Activated CD4-positive, alpha-beta T cell treated with anti-CD3 and anti-CD28 coated beads, Interleukin-2, amount 10 ng/mL, durations not matched to agents 24 days and 14 days (primary cell): ENCODE measurements at regions of chr16 and their contacts with region 1.

Region 1: GRCh38 chr16:75464130-75464918 is at the start of gene TMEM170A:
- DNase-seq: peak; percentile 100
- H3K4me3 Mint-ChIP-seq: peak within 1 kb of the TSS; percentile 89
- H3K27ac Mint-ChIP-seq: peak within 1 kb of the TSS; percentile 95
- H3K4me1 Mint-ChIP-seq: peaks cover 38% of the 10 kb centered on the region
- H3K27me3 Mint-ChIP-seq: peaks cover 2% of the 10 kb centered on the region
- total RNA-seq, gene TMEM170A: 39.1 and 46.0 TPM in 2 replicates

Region 2: DNA sequence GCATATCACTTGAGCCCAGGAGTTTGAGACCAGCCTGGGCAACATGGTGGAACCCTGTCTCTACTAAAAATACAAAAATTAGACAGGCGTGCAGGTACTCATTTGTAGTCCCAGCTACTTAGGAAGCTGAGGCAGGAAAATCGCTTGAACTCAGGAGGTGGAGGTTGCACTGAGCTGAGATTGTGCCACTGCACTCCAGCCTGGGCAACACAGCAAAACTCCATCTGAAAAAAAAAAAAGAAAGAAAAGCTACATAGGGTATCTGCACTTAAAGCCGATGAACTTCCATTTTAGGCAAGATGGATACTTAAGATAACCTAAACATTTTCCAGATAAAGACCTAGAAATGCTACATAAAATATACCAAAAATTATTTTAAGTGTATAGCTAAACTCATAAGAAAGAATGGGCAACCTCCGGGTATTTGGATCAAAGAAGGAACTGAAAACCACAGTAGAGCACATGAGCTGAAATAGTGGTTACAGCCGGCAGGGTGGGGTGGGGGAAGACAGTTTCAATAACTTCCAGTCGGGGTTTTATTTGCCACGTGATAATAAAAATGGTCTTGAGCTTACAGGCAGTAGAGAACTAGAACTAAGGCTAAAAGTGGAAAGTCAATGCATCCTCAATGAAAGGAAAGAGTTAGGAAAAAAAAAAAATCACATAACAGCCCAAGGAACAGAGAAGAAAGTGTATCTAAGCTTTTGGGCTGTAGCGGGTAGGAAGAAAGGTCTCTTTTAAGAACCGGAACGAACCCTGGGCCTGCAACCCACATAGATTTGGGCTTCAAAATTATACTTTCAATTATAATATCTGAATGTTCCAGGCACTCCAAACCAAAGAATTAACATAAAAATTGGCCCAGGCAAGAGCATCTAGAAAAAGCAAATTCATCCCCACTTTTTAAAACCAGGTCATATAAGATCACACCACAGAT is 84.1 kb before region 1 on chr16:
- intact Hi-C with region 1: no loop called
- DNase-seq: peak; percentile 81
- H3K4me3 Mint-ChIP-seq: peak overlapping the region; percentile 62
- H3K27ac Mint-ChIP-seq: peak overlapping the region; percentile 68
- H3K4me1 Mint-ChIP-seq: peaks cover 28% of the 10 kb centered on the region
- H3K27me3 Mint-ChIP-seq: peaks cover 33% of the 10 kb centered on the region

Region 3: DNA sequence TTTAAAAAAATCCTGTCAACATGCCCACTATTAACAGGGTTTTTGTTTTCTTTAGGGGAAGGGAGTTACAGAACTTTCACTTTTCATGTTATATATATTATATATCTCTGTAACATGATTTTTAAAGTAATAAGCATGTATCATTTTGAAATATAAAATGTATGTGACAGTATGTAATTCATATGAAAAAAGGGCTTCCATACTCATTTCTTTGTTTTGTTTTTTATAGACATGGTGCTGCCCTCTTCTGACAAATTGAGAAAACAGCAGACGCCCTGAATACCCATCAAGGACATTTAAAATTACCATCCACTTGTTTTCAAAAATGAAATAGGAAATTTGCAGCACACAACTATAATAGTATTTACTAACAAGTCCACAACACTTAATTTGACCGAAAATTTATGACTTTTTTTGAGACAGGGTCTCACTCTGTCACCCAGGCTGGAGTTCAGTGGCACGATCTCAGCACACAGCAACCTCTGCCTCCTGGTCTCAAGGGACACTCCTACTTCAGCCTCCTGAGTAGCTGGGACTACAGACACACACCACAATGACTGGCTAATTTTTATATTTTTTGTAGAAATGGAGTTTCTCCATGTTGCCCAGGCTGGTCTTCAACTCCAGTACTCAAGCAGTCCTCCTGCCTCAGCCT is 61.4 kb before region 1 on chr16:
- intact Hi-C with region 1: loop called (anchors 2 kb)
- DNase-seq: no peak
- H3K4me3 Mint-ChIP-seq: no peak overlapping the region
- H3K27ac Mint-ChIP-seq: no peak overlapping the region
- H3K4me1 Mint-ChIP-seq: peaks cover 12% of the 10 kb centered on the region
- H3K27me3 Mint-ChIP-seq: no peaks in the 10 kb centered on the region

Region 4: DNA sequence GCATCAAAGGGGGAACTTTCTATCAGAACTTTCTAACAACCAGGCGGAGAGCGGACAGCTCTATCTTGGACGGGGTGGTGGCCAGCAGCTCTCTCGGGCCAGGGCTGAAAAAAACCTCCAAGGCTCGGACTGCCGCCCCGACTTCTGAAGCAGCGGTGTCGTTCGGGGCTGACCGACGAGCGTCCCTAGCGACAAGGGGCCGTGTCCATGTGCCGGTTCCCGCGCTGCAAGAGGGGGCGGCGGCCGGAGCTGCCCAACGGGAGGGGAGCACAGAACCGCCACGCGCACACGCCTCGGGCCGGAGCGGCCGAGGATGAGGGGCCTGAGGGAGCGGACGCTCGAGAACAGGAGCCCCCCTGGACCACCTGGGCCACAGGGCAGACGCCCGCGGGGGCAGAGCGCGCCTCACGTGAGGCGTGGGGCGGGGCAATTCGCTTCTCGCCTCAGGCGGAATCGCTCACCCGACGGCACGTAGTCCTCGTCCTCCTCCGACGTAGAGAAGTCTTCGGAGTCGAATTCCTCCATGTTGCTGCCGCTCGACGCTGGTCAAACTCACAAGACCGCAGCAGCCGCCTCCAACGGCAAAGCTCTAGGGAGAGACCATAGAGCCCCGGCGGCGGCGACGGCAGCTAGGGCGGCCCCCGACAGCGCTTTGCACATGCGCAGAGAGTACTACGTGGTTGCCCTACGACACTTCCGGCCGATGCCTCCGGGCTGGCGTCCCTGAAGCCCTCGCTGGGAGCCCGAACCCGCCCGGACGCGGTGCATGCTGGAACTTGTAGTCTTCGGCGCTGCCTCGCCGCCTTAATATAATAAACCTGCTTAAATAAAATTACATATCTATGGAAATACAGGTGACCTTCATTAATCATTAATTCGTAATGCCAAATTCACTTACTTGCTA is 31.2 kb before region 1 on chr16 and contains the start of gene CFDP1:
- intact Hi-C with region 1: loop called (anchors 1 kb)
- DNase-seq: peak; percentile 99
- H3K4me3 Mint-ChIP-seq: peak within 1 kb of the TSS; percentile 83
- H3K27ac Mint-ChIP-seq: peak within 1 kb of the TSS; percentile 94
- H3K4me1 Mint-ChIP-seq: peaks cover 23% of the 10 kb centered on the region
- H3K27me3 Mint-ChIP-seq: no peaks in the 10 kb centered on the region
- total RNA-seq, gene CFDP1: 33.7 and 38.9 TPM in 2 replicates

Region 5: GRCh38 chr16:75555707-75556430 is 91.5 kb after region 1 on chr16 and contains the start of gene TMEM231:
- intact Hi-C with region 1: loop called (anchors 2 kb)
- DNase-seq: peak; percentile 99
- H3K4me3 Mint-ChIP-seq: peak within 1 kb of the TSS; percentile 92
- H3K27ac Mint-ChIP-seq: peak within 1 kb of the TSS; percentile 90
- H3K4me1 Mint-ChIP-seq: peaks cover 8% of the 10 kb centered on the region
- H3K27me3 Mint-ChIP-seq: peaks cover 20% of the 10 kb centered on the region
- total RNA-seq, gene TMEM231: 4.0 and 4.4 TPM in 2 replicates

Region 6: DNA sequence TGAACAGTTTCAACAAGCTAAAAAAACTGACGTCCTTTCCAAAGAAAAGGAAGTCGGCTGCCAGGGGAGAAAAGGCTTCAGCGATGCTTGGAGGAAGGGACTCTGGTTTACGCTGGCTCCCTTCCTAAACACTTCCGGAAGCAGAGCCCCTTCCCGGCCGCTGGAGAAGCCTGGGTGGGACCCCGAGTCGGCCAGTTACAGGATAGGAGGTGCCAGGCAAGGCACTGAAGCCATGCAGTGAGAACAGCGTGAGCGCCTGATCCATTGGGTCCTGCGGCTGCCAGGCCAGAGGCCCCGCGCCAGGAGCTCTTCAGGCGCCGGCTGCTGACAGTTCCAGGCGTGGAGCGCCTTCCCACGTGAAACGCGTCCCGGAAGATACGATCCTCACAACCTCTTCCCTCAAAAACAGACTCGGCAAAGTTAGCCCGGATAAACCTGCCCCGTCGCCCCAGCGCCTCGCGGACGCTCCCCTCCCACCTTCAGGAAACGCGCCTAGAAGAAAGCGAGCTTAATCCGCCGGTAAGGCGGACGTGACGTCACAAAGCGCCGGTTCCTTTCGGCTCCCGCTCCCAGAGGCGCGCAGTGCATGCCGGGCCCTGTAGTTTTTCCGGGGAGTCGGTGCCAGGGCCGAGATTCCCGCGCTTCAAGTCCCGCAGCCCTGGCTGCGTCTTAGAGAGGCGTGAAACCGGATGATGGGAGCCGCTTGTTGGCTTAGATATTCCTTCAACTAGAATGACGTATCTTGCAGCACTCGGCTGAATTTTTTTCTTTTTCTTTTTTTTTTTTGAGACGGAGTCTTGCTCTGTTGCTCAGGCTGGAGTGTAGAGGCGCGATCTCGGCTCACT is 158.7 kb after region 1 on chr16 and contains the start of gene ADAT1:
- intact Hi-C with region 1: loop called (anchors 2 kb)
- DNase-seq: peak; percentile 99
- H3K4me3 Mint-ChIP-seq: peak within 1 kb of the TSS; percentile 97
- H3K27ac Mint-ChIP-seq: peak within 1 kb of the TSS; percentile 97
- H3K4me1 Mint-ChIP-seq: peaks cover 31% of the 10 kb centered on the region
- H3K27me3 Mint-ChIP-seq: no peaks in the 10 kb centered on the region
- total RNA-seq, gene ADAT1: 58.6 and 64.4 TPM in 2 replicates